ENCODE measurements at regions of chr15 and their contacts with region 1.

Region 1: GRCh38 chr15:55993111-55993803 is at the start of gene NEDD4:
- DNase-seq: peak; percentile 87
- H3K4me3 ChIP-seq: peak within 1 kb of the TSS; percentile 84
- H3K27ac ChIP-seq: peak within 1 kb of the TSS; percentile 25
- H3K4me1 ChIP-seq: peaks cover 17% of the 10 kb centered on the region
- CTCF ChIP-seq: peak; percentile 59
- total RNA-seq, gene NEDD4: 4.6 and 4.8 TPM in 2 replicates

Region 2: DNA sequence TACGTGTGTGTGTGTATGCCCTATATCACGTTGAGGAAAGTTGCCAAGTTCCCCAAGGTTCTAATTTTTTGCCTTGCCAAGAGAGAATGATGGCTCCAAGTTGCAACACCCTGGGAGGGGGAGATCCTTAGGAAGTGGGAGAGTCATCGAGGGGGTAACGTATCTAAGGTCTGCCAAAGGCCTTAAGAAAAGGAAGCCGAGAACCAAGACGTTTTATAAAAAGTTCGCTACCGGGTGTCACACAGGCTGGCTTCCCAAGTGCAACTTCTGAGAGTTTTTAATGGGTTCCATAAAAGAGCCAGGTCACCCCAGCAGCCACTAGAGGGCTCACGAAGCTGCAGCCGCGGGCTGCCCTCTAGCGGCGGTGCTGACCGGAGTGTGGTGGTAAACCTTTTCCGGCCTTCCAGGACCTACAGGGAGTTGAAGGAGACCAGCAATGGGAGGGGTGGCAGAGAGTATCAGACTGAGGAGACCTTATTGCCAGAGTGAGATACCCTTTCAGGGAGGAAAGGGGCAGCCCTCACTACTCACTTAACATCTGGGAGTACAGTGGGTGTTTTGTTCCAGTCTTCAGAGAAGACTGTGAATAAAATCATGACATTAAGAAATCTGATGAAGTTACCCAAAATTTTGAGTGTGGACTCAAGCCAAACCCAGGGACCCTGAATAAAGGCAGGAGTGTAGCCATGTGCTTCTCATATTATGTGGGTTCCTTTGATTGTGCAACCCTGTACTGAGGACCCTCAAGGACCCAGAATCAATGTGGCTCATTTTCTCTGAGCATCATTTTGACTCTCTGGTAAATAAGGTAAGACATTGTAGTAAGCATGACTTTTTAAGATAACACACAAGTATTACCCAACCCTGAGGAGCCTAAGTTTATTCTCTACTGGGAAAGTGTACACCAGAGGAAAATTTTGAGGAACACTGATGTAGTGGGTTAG is 252.9 kb after region 1 on chr15:
- CTCF ChIA-PET with region 1: no interaction called
- POLR2A ChIA-PET with region 1: interaction called, 4 read pairs
- intact Hi-C with region 1: loop called (anchors 2 kb)
- DNase-seq: peak; percentile 96
- H3K4me3 ChIP-seq: peak overlapping the region; percentile 88
- H3K27ac ChIP-seq: peak overlapping the region; percentile 76
- H3K4me1 ChIP-seq: peaks cover 26% of the 10 kb centered on the region
- CTCF ChIP-seq: peak; percentile 100

Region 3: DNA sequence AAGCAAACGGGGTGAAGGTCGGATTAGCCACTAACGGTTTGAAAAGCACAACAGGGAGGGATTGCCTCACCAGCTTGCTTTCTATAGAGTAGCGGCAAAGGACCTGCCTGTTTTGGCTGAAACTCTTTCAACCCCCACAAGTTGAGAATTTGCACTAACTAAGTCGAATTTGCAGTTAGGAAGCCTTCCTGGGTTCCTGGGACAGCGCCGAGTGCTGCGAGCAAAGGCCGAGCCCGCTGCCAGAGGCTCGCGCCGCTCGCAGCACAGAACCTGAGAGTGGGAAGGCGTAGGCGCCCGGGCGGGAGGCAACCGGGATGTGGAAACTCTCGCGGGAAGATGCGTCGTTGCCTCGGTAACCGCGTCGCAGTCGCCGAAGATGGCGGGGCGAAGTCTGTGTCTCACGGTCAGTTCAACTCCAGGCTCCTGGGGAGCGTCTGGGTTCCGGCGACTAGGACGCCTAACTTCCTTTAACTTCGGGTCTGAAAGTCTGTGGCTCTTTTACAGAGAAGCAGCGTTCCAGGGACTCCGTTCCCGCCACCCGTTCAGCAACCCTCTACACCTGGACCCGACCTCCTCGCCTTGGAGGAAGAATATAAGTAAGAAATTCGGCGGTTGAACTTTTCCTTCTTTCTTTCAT is 371.9 kb after region 1 on chr15 and contains the start of gene TEX9:
- CTCF ChIA-PET with region 1: no interaction called
- POLR2A ChIA-PET with region 1: interaction called, 3 read pairs
- intact Hi-C with region 1: loop called (anchors 5 kb)
- DNase-seq: peak; percentile 93
- H3K4me3 ChIP-seq: peak within 1 kb of the TSS; percentile 88
- H3K27ac ChIP-seq: peak within 1 kb of the TSS; percentile 93
- H3K4me1 ChIP-seq: peaks cover 18% of the 10 kb centered on the region
- CTCF ChIP-seq: no peak
- total RNA-seq, gene TEX9: 16.9 and 20.0 TPM in 2 replicates